ENCODE measurements at regions of chr7 and their contacts with region 1.

Region 1: DNA sequence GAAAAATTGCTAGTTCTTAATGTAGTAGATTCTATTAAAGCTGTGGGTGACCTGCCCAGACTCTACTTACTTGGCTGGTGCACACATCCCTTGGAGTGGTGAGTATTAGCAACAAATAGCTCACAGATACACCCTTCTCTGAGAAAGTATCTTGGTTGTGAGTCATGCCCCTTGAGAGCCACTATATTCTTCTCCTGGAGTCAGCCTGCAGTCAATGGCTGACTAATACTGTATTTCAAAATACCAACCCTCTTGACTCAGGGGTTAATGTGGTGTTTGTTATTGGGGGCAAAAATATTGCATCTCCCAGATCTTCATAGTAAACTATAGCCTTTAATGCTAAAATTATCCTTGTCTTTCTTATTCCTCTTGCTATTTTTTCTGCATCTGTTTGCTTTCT is 354.9 kb downstream of the BMPER start:
- DNase-seq: no peak
- H3K4me3 ChIP-seq: no peak overlapping the region
- H3K27ac ChIP-seq: no peak overlapping the region
- H3K4me1 ChIP-seq: no peaks in the 10 kb centered on the region
- H3K27me3 ChIP-seq: no peaks in the 10 kb centered on the region
- CTCF ChIP-seq: no peak
- EP300 ChIP-seq: no peak
- POLR2A ChIP-seq: no peak

Region 2: DNA sequence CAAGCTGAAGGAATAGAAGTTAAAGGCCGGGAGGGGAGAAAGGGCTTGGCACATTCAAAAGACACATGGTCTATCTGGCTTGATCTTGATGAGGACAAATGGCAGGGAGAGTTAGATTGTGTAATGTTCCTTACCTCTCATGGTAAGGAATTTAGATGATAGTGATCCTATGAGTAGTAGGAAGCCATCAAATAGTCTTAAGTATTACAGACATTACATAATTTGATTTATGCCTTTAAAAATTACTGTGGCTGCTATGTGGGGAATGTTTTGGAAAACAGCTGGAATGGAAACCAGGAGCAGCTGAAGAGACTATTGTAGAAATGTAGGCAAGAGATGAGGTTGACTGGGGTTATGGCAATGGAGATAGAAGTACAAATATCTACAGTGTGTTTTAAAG is 706.2 kb before region 1 on chr7:
- in situ Hi-C with region 1: no loop called
- intact Hi-C with region 1: no loop called
- DNase-seq: no peak
- H3K4me3 ChIP-seq: no peak overlapping the region
- H3K27ac ChIP-seq: no peak overlapping the region
- H3K4me1 ChIP-seq: peaks cover 0 to 4% (median 0%) of the 10 kb centered on the region in 4 donors
- H3K27me3 ChIP-seq: no peaks in the 10 kb centered on the region
- CTCF ChIP-seq: no peak
- EP300 ChIP-seq: no peak
- POLR2A ChIP-seq: no peak

Region 3: GRCh38 chr7:33789871-33790630 is 470.2 kb before region 1 on chr7:
- in situ Hi-C with region 1: no loop called
- intact Hi-C with region 1: no loop called
- DNase-seq: no peak
- H3K4me3 ChIP-seq: no peak overlapping the region
- H3K27ac ChIP-seq: no peak overlapping the region
- H3K4me1 ChIP-seq: no peaks in the 10 kb centered on the region
- H3K27me3 ChIP-seq: no peaks in the 10 kb centered on the region
- CTCF ChIP-seq: no peak
- EP300 ChIP-seq: no peak
- POLR2A ChIP-seq: no peak

Region 4: GRCh38 chr7:34165929-34166550 is 94.2 kb before region 1 on chr7:
- in situ Hi-C with region 1: loop called in 1 of 4 experiments (anchors 25 kb)
- intact Hi-C with region 1: no loop called
- DNase-seq: no peak
- H3K4me3 ChIP-seq: no peak overlapping the region
- H3K27ac ChIP-seq: no peak overlapping the region
- H3K4me1 ChIP-seq: no peaks in the 10 kb centered on the region
- H3K27me3 ChIP-seq: no peaks in the 10 kb centered on the region
- CTCF ChIP-seq: peak; percentile 18 to 38 (median 31)
- EP300 ChIP-seq: no peak
- POLR2A ChIP-seq: no peak

Region 5: GRCh38 chr7:34198231-34198641 is 62.0 kb before region 1 on chr7:
- in situ Hi-C with region 1: no loop called
- intact Hi-C with region 1: no loop called
- DNase-seq: no peak
- H3K4me3 ChIP-seq: no peak overlapping the region
- H3K27ac ChIP-seq: no peak overlapping the region
- H3K4me1 ChIP-seq: no peaks in the 10 kb centered on the region
- H3K27me3 ChIP-seq: no peaks in the 10 kb centered on the region
- CTCF ChIP-seq: no peak
- EP300 ChIP-seq: no peak
- POLR2A ChIP-seq: no peak